Activated CD4-positive, alpha-beta T cell treated with anti-CD3 and anti-CD28 coated beads for 36 hours (primary cell): ENCODE measurements at regions of chr10 and their contacts with region 1.

Region 1: GRCh38 chr10:8130973-8131911 is 76.8 kb downstream of the GATA3 start:
- DNase-seq: peak; percentile 56
- ATAC-seq: peak; percentile 82
- H3K4me3 Mint-ChIP-seq: no peak overlapping the region
- H3K27ac Mint-ChIP-seq: peak overlapping the region; percentile 51
- H3K4me1 Mint-ChIP-seq: peaks cover 40% of the 10 kb centered on the region
- H3K27me3 Mint-ChIP-seq: peaks cover 7% of the 10 kb centered on the region

Region 2: GRCh38 chr10:6802762-6803426 is 1328.3 kb before region 1 on chr10:
- CTCF ChIA-PET with region 1: no interaction called
- POLR2A ChIA-PET with region 1: no interaction called
- intact Hi-C with region 1: no loop called
- DNase-seq: no peak
- ATAC-seq: no peak
- H3K4me3 Mint-ChIP-seq: no peak overlapping the region
- H3K27ac Mint-ChIP-seq: no peak overlapping the region
- H3K4me1 Mint-ChIP-seq: no peaks in the 10 kb centered on the region
- H3K27me3 Mint-ChIP-seq: peaks cover 4% of the 10 kb centered on the region

Region 3: GRCh38 chr10:7484456-7485243 is 646.6 kb before region 1 on chr10:
- CTCF ChIA-PET with region 1: no interaction called
- POLR2A ChIA-PET with region 1: no interaction called
- intact Hi-C with region 1: no loop called
- DNase-seq: peak; percentile 72
- ATAC-seq: peak; percentile 90
- H3K4me3 Mint-ChIP-seq: peak overlapping the region; percentile 42
- H3K27ac Mint-ChIP-seq: peak overlapping the region; percentile 79
- H3K4me1 Mint-ChIP-seq: peaks cover 78% of the 10 kb centered on the region
- H3K27me3 Mint-ChIP-seq: no peaks in the 10 kb centered on the region

Region 4: DNA sequence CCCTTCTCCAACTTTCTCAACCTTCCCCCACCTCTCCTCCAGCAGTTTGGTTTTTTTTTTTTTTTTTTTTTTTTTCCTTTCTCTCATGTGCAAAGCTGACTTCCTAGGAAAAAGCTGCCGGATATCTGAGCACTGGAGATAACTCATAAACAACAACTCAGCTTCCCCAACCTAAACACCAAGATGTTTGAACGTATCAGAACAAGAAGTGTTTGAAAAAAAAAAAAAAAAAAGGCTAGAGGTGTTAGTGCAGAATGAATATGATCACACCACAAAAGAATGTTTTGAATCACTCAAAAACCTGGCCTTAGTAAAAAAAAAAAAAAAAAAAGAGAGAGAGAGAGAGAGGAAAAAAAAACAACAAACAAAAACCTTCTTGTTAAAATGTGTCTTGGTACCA is 65.6 kb before region 1 on chr10:
- CTCF ChIA-PET with region 1: no interaction called
- POLR2A ChIA-PET with region 1: interaction called, 4 read pairs
- intact Hi-C with region 1: loop called (anchors 1 kb)
- DNase-seq: no peak
- ATAC-seq: peak; percentile 43
- H3K4me3 Mint-ChIP-seq: peak overlapping the region; percentile 64
- H3K27ac Mint-ChIP-seq: peak overlapping the region; percentile 90
- H3K4me1 Mint-ChIP-seq: peaks cover 95% of the 10 kb centered on the region
- H3K27me3 Mint-ChIP-seq: no peaks in the 10 kb centered on the region

Region 5: DNA sequence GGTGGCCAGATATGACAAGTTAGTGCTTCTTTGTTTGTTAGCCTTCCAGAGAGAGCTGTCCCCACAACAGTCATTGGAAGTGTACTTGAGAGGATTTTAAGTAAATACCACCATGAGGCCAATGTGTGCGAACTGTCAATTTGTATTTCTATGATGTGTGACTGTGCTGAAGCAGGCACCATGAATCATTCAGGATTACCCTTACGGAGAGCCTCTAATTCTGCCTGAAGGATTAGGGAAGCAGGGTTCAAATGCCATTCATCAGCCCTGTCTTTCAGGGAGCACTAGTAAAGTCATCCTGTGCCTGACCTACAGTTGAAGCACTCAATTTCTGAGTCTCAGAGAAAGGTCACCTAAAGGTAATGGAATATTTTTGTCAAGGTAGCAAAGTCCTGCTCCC is 32.6 kb after region 1 on chr10:
- CTCF ChIA-PET with region 1: no interaction called
- POLR2A ChIA-PET with region 1: no interaction called
- intact Hi-C with region 1: no loop called
- DNase-seq: no peak
- ATAC-seq: no peak
- H3K4me3 Mint-ChIP-seq: no peak overlapping the region
- H3K27ac Mint-ChIP-seq: no peak overlapping the region
- H3K4me1 Mint-ChIP-seq: peaks cover 11% of the 10 kb centered on the region
- H3K27me3 Mint-ChIP-seq: peaks cover 3% of the 10 kb centered on the region

Region 6: GRCh38 chr10:8183241-8183704 is 52.0 kb after region 1 on chr10:
- CTCF ChIA-PET with region 1: no interaction called
- POLR2A ChIA-PET with region 1: no interaction called
- intact Hi-C with region 1: no loop called
- DNase-seq: peak; percentile 23
- ATAC-seq: peak; percentile 88
- H3K4me3 Mint-ChIP-seq: no peak overlapping the region
- H3K27ac Mint-ChIP-seq: peak overlapping the region; percentile 1
- H3K4me1 Mint-ChIP-seq: peaks cover 28% of the 10 kb centered on the region
- H3K27me3 Mint-ChIP-seq: no peaks in the 10 kb centered on the region

Region 7: GRCh38 chr10:8254350-8254749 is 123.1 kb after region 1 on chr10:
- CTCF ChIA-PET with region 1: interaction called, 3 read pairs
- POLR2A ChIA-PET with region 1: interaction called, 4 read pairs
- intact Hi-C with region 1: loop called (anchors 1 to 5 kb)
- DNase-seq: peak; percentile 57
- ATAC-seq: peak; percentile 96
- H3K4me3 Mint-ChIP-seq: no peak overlapping the region
- H3K27ac Mint-ChIP-seq: peak overlapping the region; percentile 92
- H3K4me1 Mint-ChIP-seq: peaks cover 22% of the 10 kb centered on the region
- H3K27me3 Mint-ChIP-seq: no peaks in the 10 kb centered on the region

Region 8: GRCh38 chr10:8338177-8338766 is 207.0 kb after region 1 on chr10:
- CTCF ChIA-PET with region 1: no interaction called
- POLR2A ChIA-PET with region 1: no interaction called
- intact Hi-C with region 1: loop called (anchors 2 kb)
- DNase-seq: peak; percentile 27
- ATAC-seq: peak; percentile 96
- H3K4me3 Mint-ChIP-seq: peak overlapping the region; percentile 14
- H3K27ac Mint-ChIP-seq: peak overlapping the region; percentile 86
- H3K4me1 Mint-ChIP-seq: peaks cover 31% of the 10 kb centered on the region
- H3K27me3 Mint-ChIP-seq: no peaks in the 10 kb centered on the region

Region 9: GRCh38 chr10:9010093-9010492 is 878.9 kb after region 1 on chr10:
- CTCF ChIA-PET with region 1: no interaction called
- POLR2A ChIA-PET with region 1: no interaction called
- intact Hi-C with region 1: loop called in 1 of 2 experiments (anchors 10 kb)
- DNase-seq: peak; percentile 42
- ATAC-seq: peak; percentile 80
- H3K4me3 Mint-ChIP-seq: peak overlapping the region; percentile 30
- H3K27ac Mint-ChIP-seq: peak overlapping the region; percentile 78
- H3K4me1 Mint-ChIP-seq: peaks cover 64% of the 10 kb centered on the region
- H3K27me3 Mint-ChIP-seq: peaks cover 2% of the 10 kb centered on the region

Region 10: DNA sequence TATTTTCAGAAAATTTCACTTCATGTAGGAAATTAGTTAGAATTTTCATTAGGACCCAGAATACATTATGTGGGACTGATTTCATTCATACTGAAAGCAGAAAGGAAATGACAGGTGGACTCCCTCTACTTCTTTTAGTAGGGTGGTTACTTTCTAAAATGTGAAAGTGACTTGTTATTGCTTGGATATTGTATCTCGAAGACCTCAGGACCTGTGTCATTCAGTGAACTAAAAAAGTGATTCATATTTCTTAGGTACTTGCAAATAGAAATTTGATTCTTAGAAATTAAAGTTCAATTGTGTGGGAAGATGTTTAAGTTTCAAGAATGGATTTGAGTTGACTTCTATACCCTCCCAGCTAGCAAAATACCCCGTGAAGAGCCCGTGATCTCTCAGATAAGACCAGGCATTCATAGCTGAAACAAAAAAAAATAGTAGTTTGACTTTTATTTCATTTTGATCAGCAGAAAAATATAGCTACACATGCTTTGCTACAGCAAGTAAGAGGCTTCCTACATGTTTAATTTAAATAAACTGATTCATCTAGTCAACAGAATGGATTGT is 960.4 kb after region 1 on chr10:
- CTCF ChIA-PET with region 1: no interaction called
- POLR2A ChIA-PET with region 1: no interaction called
- intact Hi-C with region 1: loop called (anchors 5 kb)
- DNase-seq: peak; percentile 57
- ATAC-seq: peak; percentile 97
- H3K4me3 Mint-ChIP-seq: peak overlapping the region; percentile 27
- H3K27ac Mint-ChIP-seq: peak overlapping the region; percentile 52
- H3K4me1 Mint-ChIP-seq: peaks cover 51% of the 10 kb centered on the region
- H3K27me3 Mint-ChIP-seq: peaks cover 3% of the 10 kb centered on the region